ENCODE measurements at regions of chr2 and their contacts with region 1.

Region 1: GRCh38 chr2:5325523-5325922 is 366.7 kb upstream of the SOX11 start:
- DNase-seq: no peak
- ATAC-seq: no peak
- H3K4me3 ChIP-seq: no peak overlapping the region
- H3K4me3 Mint-ChIP-seq: no peak overlapping the region
- H3K27ac ChIP-seq: no peak overlapping the region
- H3K27ac Mint-ChIP-seq: no peak overlapping the region
- H3K4me1 ChIP-seq: no peaks in the 10 kb centered on the region
- H3K4me1 Mint-ChIP-seq: no peaks in the 10 kb centered on the region
- H3K27me3 ChIP-seq: no peaks in the 10 kb centered on the region
- H3K27me3 Mint-ChIP-seq: no peaks in the 10 kb centered on the region
- CTCF ChIP-seq: no peak

Region 2: GRCh38 chr2:5315512-5315911 is 10.0 kb before region 1 on chr2:
- CTCF ChIA-PET with region 1: no interaction called
- POLR2A ChIA-PET with region 1: no interaction called
- intact Hi-C with region 1: loop called in 1 of 2 experiments (anchors 1 kb)
- DNase-seq: no peak
- ATAC-seq: no peak
- H3K4me3 ChIP-seq: no peak overlapping the region
- H3K4me3 Mint-ChIP-seq: no peak overlapping the region
- H3K27ac ChIP-seq: no peak overlapping the region
- H3K27ac Mint-ChIP-seq: no peak overlapping the region
- H3K4me1 ChIP-seq: no peaks in the 10 kb centered on the region
- H3K4me1 Mint-ChIP-seq: no peaks in the 10 kb centered on the region
- H3K27me3 ChIP-seq: no peaks in the 10 kb centered on the region
- H3K27me3 Mint-ChIP-seq: no peaks in the 10 kb centered on the region
- CTCF ChIP-seq: no peak

Region 3: GRCh38 chr2:5365871-5366461 is 40.4 kb after region 1 on chr2:
- CTCF ChIA-PET with region 1: no interaction called
- POLR2A ChIA-PET with region 1: no interaction called
- intact Hi-C with region 1: no loop called
- DNase-seq: peak in 4 of 9 experiments; percentile 1 to 14 (median 6)
- ATAC-seq: no peak
- H3K4me3 ChIP-seq: no peak overlapping the region
- H3K4me3 Mint-ChIP-seq: no peak overlapping the region
- H3K27ac ChIP-seq: no peak overlapping the region
- H3K27ac Mint-ChIP-seq: no peak overlapping the region
- H3K4me1 ChIP-seq: no peaks in the 10 kb centered on the region
- H3K4me1 Mint-ChIP-seq: no peaks in the 10 kb centered on the region
- H3K27me3 ChIP-seq: no peaks in the 10 kb centered on the region
- H3K27me3 Mint-ChIP-seq: peaks cover 2% of the 10 kb centered on the region
- CTCF ChIP-seq: no peak

Region 4: DNA sequence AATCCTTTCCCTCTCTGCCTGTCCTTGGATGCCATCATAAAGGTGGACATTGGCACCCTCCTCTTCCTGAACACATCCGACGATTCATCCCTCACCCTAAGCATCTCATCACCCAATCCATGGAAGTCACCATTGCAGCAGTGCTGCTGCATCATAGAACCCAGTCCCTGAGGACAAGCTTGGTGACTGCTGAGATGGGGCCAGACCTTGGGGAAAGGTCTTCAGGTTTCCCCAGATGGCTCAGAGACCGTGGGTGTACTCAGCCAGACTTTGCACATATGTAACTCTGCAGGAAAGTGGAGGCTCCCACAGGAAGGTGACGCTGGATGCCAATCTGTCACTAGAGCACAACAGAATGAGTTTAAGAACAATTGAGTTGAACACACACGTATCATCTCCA is 568.8 kb after region 1 on chr2:
- CTCF ChIA-PET with region 1: no interaction called
- POLR2A ChIA-PET with region 1: no interaction called
- intact Hi-C with region 1: no loop called
- DNase-seq: no peak
- ATAC-seq: no peak
- H3K4me3 ChIP-seq: no peak overlapping the region
- H3K4me3 Mint-ChIP-seq: no peak overlapping the region
- H3K27ac ChIP-seq: no peak overlapping the region
- H3K27ac Mint-ChIP-seq: no peak overlapping the region
- H3K4me1 ChIP-seq: no peaks in the 10 kb centered on the region
- H3K4me1 Mint-ChIP-seq: no peaks in the 10 kb centered on the region
- H3K27me3 ChIP-seq: no peaks in the 10 kb centered on the region
- H3K27me3 Mint-ChIP-seq: no peaks in the 10 kb centered on the region
- CTCF ChIP-seq: no peak

Measured in CD8-positive, alpha-beta T cell (primary cell).